ENCODE measurements at regions of chr22 and their contacts with region 1.

Region 1: GRCh38 chr22:46762238-46763050 is at the start of gene TBC1D22A:
- DNase-seq: peak; percentile 91 to 97 (median 95)
- ATAC-seq: peak; percentile 86
- H3K4me3 ChIP-seq: peak within 1 kb of the TSS; percentile 84 to 99
- H3K4me3 Mint-ChIP-seq: peak within 1 kb of the TSS; percentile 99
- H3K27ac ChIP-seq: peak within 1 kb of the TSS; percentile 95 to 99
- H3K27ac Mint-ChIP-seq: peak within 1 kb of the TSS; percentile 100
- H3K4me1 ChIP-seq: peaks cover 36% of the 10 kb centered on the region
- H3K4me1 Mint-ChIP-seq: peaks cover 64% of the 10 kb centered on the region
- H3K27me3 ChIP-seq: no peaks in the 10 kb centered on the region
- H3K27me3 Mint-ChIP-seq: no peaks in the 10 kb centered on the region
- CTCF ChIP-seq: no peak
- total RNA-seq, gene TBC1D22A: 21.8 to 27.4 TPM

Region 2: DNA sequence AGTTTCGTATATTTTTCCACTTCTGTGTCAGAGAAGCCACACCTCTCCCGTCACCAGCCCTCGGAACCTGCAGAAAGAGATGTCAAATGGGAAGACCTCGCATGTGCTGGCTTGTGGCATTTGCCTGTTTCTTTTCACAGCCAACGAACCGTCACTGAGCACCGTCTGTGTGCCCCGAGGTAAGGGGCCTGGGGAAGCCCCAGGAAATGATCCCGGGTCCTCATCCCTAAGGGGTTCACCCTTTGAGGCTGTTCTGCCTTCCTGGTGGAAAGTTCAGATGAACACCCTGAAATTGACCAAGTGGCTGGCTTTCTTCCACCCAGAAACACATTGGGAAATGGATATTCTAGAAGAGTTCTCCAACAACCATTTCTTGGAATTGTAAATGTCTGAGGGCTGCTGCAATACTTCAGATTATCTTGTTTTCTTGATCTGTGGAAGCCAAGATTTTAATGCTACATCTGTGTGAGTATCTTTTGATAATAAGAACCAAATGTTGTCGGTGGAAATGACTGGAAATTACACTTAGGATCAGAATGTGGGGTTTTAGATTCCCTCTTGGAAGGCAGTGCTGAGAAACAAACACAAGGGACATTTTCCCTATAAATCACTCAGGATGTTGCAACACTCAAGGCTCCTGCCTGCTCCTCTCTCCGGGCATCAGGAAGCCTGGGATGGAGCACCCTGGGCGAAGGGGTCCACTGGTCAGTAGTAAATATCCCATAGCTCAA is 1311.4 kb before region 1 on chr22:
- CTCF ChIA-PET with region 1: no interaction called
- POLR2A ChIA-PET with region 1: no interaction called
- intact Hi-C with region 1: no loop called
- DNase-seq: no peak
- ATAC-seq: no peak
- H3K4me3 ChIP-seq: no peak overlapping the region
- H3K4me3 Mint-ChIP-seq: no peak overlapping the region
- H3K27ac ChIP-seq: no peak overlapping the region
- H3K27ac Mint-ChIP-seq: no peak overlapping the region
- H3K4me1 ChIP-seq: no peaks in the 10 kb centered on the region
- H3K4me1 Mint-ChIP-seq: no peaks in the 10 kb centered on the region
- H3K27me3 ChIP-seq: no peaks in the 10 kb centered on the region
- H3K27me3 Mint-ChIP-seq: peaks cover 6% of the 10 kb centered on the region
- CTCF ChIP-seq: no peak

Region 3: DNA sequence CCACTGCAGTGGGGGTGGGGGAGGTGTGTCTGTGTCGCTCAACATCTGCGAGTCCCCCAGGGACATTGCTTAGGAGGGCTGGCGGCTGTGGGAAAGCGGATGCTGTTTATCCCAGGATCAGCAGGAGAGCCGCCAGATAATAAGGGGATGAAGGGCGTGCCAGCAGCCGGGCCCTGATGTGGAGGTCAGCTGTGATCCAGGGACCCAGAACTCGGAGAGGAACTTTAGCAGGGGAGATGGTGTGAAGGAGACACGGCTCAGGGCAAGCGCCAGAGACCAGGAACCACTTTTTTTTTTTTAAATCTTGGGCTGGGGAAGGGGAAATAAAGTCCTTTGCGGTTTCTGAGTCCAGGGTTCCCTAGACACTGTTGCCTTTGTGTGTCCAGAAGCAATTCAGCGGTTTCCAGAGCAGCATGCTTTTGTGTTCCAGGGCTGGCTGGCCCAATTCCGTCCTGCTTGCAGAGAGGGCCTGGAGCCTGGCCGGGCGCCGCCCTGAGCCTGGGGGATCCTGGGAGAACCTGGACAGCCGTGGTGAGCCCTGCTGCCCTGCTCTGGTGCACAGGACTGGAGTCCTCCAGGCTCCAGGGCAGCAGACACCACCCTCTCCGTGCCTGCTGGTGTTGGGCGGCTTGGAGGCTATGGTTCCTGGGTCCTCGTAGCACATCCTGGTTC is 142.5 kb before region 1 on chr22 and contains the start of gene GRAMD4:
- CTCF ChIA-PET with region 1: no interaction called
- POLR2A ChIA-PET with region 1: no interaction called
- intact Hi-C with region 1: no loop called
- DNase-seq: peak in 1 of 9 experiments; percentile 14
- ATAC-seq: no peak
- H3K4me3 ChIP-seq: no peak within 1 kb of the TSS
- H3K4me3 Mint-ChIP-seq: no peak within 1 kb of the TSS
- H3K27ac ChIP-seq: no peak within 1 kb of the TSS
- H3K27ac Mint-ChIP-seq: no peak within 1 kb of the TSS
- H3K4me1 ChIP-seq: no peaks in the 10 kb centered on the region
- H3K4me1 Mint-ChIP-seq: no peaks in the 10 kb centered on the region
- H3K27me3 ChIP-seq: no peaks in the 10 kb centered on the region
- H3K27me3 Mint-ChIP-seq: no peaks in the 10 kb centered on the region
- CTCF ChIP-seq: no peak
- total RNA-seq, gene GRAMD4: 8.4 to 8.7 TPM

Region 4: DNA sequence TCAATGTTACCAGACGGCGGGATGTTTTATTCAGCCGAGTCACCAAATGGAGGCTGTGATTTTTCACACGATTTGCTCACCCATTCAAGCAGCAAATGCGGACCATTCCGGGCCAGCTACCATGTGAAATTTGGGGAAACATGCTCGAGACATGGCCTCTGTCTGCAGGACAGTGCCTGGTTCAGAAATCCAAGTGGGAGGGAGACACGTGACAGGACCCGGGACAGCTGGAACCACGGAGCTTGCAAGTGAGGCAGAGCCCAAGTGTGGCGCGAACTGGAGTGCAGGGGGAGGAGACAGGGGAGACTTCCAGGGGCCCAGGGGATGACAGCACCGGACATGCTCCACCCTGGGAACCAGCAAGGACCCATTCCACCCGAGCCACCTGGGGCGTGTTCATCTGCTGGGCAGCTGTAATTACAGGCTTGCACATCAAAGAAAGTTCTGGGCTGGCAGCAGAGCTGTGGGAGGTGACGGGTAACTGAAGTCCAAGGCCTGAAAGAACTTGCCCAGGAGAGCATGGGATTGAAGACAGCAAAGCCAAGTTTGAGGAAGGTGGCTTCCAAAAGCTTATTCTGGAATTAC is 40.9 kb before region 1 on chr22:
- CTCF ChIA-PET with region 1: interaction called, 13 read pairs
- POLR2A ChIA-PET with region 1: interaction called, 4 read pairs
- intact Hi-C with region 1: no loop called
- DNase-seq: no peak
- ATAC-seq: no peak
- H3K4me3 ChIP-seq: no peak overlapping the region
- H3K4me3 Mint-ChIP-seq: no peak overlapping the region
- H3K27ac ChIP-seq: no peak overlapping the region
- H3K27ac Mint-ChIP-seq: peak overlapping the region; percentile 72
- H3K4me1 ChIP-seq: no peaks in the 10 kb centered on the region
- H3K4me1 Mint-ChIP-seq: peaks cover 27% of the 10 kb centered on the region
- H3K27me3 ChIP-seq: no peaks in the 10 kb centered on the region
- H3K27me3 Mint-ChIP-seq: no peaks in the 10 kb centered on the region
- CTCF ChIP-seq: no peak

Region 5: DNA sequence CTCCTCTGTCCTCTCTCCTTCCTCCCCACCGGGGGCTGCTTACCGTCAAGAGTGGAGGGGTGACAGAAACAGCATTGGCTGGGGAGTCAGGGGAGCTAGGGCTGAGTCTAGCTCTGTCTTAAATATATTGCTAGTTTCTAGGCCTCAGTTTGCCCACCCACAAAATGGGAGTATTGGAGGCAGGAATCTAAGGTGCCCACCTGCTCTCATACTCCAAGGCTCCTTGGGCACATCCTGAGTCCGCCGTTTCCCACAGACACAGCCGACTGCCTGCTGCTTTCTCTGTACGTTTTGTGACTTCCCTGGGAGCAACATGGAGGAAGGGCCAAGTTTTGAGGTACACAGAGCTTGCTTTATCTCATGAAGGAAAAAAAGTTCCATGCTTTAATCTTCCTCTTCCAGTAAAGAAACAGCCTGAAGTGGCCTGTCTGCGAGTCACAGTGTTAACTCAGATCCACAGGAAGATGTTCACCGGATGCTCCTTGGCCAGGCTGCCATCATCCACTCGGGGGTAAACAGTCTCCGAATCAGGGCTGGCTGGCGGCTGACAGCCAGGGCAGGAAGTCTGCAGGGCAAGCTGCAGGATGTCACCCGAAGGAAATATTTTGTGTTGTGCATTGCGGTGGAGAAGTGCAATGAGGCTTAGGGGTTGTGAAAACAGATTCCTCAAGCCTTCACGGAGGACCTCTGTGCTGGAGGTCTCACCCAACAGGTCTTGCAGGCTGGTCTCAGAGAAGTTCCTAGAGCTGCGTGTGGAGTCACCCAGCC is 13.4 kb before region 1 on chr22:
- CTCF ChIA-PET with region 1: interaction called, 52 read pairs
- POLR2A ChIA-PET with region 1: interaction called, 46 read pairs
- intact Hi-C with region 1: loop called in 1 of 2 experiments (anchors 2 kb)
- DNase-seq: peak; percentile 57 to 88 (median 80)
- ATAC-seq: peak; percentile 95
- H3K4me3 ChIP-seq: peak overlapping the region; percentile 11 to 38
- H3K4me3 Mint-ChIP-seq: peak overlapping the region; percentile 78
- H3K27ac ChIP-seq: peak overlapping the region; percentile 55 to 82
- H3K27ac Mint-ChIP-seq: peak overlapping the region; percentile 97
- H3K4me1 ChIP-seq: peaks cover 26% of the 10 kb centered on the region
- H3K4me1 Mint-ChIP-seq: peaks cover 24% of the 10 kb centered on the region
- H3K27me3 ChIP-seq: no peaks in the 10 kb centered on the region
- H3K27me3 Mint-ChIP-seq: no peaks in the 10 kb centered on the region
- CTCF ChIP-seq: no peak

Region 6: DNA sequence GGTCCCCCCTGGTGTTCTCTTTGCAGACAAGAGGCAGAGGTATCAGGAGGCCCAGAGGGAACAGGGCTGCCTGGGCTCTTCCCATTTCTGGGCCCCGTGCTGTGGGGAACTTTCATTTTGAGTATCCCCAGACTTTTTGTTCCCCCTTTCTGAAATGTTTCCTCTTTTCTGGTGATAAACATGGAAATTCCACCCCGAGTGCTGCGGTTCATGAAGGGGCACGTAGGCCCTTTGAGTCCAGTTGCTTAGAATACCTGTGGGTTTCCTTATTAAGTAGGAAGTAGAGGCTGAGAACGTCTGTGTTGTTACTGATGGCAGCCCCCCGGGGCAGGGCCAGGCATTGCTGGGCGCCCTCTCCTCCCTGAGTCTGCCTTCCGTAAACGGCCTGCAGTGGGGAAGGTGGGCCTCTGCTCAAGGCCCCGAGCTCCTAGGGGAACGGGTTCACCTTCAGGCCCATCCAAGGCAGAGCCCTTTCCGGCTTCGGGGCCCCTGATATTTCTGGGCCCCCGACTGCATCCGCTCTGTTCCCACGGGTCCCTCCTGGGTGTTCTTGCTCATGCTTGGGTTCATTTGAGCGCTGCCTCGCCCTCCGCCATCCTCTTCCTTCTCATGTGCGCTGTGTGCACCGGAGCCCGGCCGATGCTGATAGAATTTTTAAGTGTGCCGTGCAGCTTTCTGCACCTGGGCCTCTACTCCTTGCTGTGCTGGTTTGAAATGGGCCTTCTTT is 12.0 kb after region 1 on chr22:
- CTCF ChIA-PET with region 1: interaction called, 8 read pairs
- POLR2A ChIA-PET with region 1: interaction called, 15 read pairs
- intact Hi-C with region 1: loop called in 1 of 2 experiments (anchors 2 kb)
- DNase-seq: peak in 2 of 9 experiments; percentile 21 to 48
- ATAC-seq: peak; percentile 39
- H3K4me3 ChIP-seq: no peak overlapping the region
- H3K4me3 Mint-ChIP-seq: peak overlapping the region; percentile 73
- H3K27ac ChIP-seq: peak overlapping the region; percentile 35 to 59
- H3K27ac Mint-ChIP-seq: peak overlapping the region; percentile 95
- H3K4me1 ChIP-seq: peaks cover 71% of the 10 kb centered on the region
- H3K4me1 Mint-ChIP-seq: peaks cover 76% of the 10 kb centered on the region
- H3K27me3 ChIP-seq: no peaks in the 10 kb centered on the region
- H3K27me3 Mint-ChIP-seq: no peaks in the 10 kb centered on the region
- CTCF ChIP-seq: no peak

Region 7: GRCh38 chr22:46791201-46791731 is 28.8 kb after region 1 on chr22:
- CTCF ChIA-PET with region 1: interaction called, 11 read pairs
- POLR2A ChIA-PET with region 1: interaction called, 49 read pairs
- intact Hi-C with region 1: loop called (anchors 1 kb)
- DNase-seq: peak; percentile 69 to 96 (median 85)
- ATAC-seq: peak; percentile 90
- H3K4me3 ChIP-seq: peak overlapping the region; percentile 29 to 47
- H3K4me3 Mint-ChIP-seq: peak overlapping the region; percentile 76
- H3K27ac ChIP-seq: peak overlapping the region; percentile 95 to 99
- H3K27ac Mint-ChIP-seq: peak overlapping the region; percentile 100
- H3K4me1 ChIP-seq: peaks cover 36% of the 10 kb centered on the region
- H3K4me1 Mint-ChIP-seq: peaks cover 50% of the 10 kb centered on the region
- H3K27me3 ChIP-seq: no peaks in the 10 kb centered on the region
- H3K27me3 Mint-ChIP-seq: no peaks in the 10 kb centered on the region
- CTCF ChIP-seq: no peak

Measured in CD8-positive, alpha-beta T cell (primary cell).